A549 (cell line): ENCODE measurements at regions of chr17 and their contacts with region 1.

Region 1: GRCh38 chr17:77054936-77055335 is 85.8 kb upstream of the SEC14L1 start:
- DNase-seq: no peak
- ATAC-seq: peak; percentile 27 to 39; a peak in 5 of 6 replicates
- H3K4me3 ChIP-seq: no peak overlapping the region
- H3K27ac ChIP-seq: peak overlapping the region; percentile 26 to 86; a peak in 5 of 6 replicates
- H3K4me1 ChIP-seq: peaks cover 14% of the 10 kb centered on the region
- CTCF ChIP-seq: no peak
- EP300 ChIP-seq: no peak
- POLR2A ChIP-seq: no peak
- RAD21 ChIP-seq: no peak

Region 2: DNA sequence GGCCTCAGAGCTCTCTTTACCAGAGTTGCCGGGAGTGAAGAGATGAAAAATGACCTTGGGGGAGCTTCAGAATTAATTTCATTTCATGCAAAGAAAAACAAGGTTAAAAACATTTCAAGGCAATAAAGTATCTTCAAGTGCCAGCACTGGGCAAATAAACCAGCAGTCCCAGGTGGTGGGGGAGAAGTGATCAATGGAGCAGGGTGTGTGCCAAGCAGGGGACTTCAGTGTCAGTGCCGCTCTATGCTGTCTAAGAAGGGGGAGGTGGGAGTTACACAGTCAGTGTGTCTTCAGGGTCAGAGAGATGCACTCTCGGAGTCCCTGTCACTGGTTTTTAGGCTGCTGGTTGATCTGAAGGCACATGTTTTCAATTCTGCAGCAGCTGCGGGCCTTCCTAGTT is 244.0 kb before region 1 on chr17:
- CTCF ChIA-PET with region 1: interaction called, 37 read pairs
- POLR2A ChIA-PET with region 1: no interaction called
- DNase-seq: no peak
- ATAC-seq: no peak; a peak in 1 of 6 replicates
- H3K4me3 ChIP-seq: no peak overlapping the region
- H3K27ac ChIP-seq: no peak overlapping the region
- H3K4me1 ChIP-seq: no peaks in the 10 kb centered on the region
- CTCF ChIP-seq: no peak
- EP300 ChIP-seq: no peak
- POLR2A ChIP-seq: no peak
- RAD21 ChIP-seq: no peak

Region 3: GRCh38 chr17:76862494-76862893 is 192.4 kb before region 1 on chr17:
- CTCF ChIA-PET with region 1: interaction called, 776 read pairs
- POLR2A ChIA-PET with region 1: interaction called, 17 read pairs
- DNase-seq: no peak
- ATAC-seq: no peak
- H3K4me3 ChIP-seq: no peak overlapping the region
- H3K27ac ChIP-seq: no peak overlapping the region
- H3K4me1 ChIP-seq: peaks cover 9% of the 10 kb centered on the region
- CTCF ChIP-seq: no peak
- EP300 ChIP-seq: no peak
- POLR2A ChIP-seq: no peak
- RAD21 ChIP-seq: no peak

Region 4: DNA sequence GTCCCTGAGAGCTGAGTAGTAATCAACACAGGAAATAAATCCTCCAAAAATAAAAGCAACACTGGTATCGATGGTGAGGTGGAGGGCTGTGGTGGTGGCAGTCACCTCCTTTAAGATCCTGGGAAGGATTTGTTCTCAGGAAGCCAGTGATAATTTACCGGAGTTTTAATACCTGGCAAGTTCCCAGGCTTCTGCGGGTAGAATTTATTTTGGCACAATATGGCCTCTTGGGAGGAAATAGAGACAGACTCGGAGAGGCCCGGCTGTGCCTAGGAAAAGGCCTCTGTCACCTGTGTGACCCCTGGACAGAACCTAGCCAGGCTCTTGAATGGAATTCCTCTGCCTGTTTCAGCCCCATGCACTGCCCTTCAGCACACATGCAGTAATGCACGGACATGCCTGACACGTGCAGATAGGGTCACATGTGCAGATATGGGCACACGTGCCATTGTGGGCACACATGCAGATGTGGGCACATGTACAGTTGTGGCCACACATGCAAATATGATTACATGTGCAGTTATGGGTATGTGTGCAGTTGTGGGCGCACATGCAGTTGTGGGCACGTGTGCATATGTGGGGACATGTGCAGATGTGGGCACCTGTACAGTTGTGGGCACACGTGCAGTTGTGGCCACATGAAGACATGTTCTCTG is 153.3 kb before region 1 on chr17:
- CTCF ChIA-PET with region 1: interaction called, 14 read pairs
- POLR2A ChIA-PET with region 1: no interaction called
- DNase-seq: no peak
- ATAC-seq: no peak
- H3K4me3 ChIP-seq: no peak overlapping the region
- H3K27ac ChIP-seq: no peak overlapping the region
- H3K4me1 ChIP-seq: no peaks in the 10 kb centered on the region
- CTCF ChIP-seq: no peak
- EP300 ChIP-seq: no peak
- POLR2A ChIP-seq: no peak
- RAD21 ChIP-seq: no peak

Region 5: DNA sequence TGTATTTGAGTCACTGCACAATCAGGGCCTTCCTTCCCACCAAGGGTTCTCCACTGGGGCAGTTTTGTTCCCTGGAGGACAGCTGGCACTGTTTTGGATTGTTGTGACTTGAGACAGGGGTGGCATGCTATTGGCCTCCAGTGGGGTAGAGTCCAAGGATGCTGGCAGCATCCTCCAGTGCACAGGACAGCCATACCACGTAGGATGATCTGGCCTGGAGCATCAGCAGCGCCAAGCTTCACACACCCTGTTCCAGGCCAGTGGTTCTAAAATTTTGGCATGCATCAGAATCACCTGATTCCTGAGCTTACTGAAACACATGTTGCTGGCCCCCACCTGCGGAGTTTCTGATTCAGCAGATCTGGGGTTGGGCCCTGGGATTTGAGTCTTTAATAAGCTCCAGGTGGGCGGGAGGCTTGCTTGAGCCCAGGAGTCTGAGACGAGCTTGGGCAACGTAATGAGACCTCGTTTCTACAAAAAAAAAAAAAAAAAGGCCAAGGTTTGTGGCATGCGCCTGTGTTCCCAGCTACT is 103.5 kb before region 1 on chr17:
- CTCF ChIA-PET with region 1: interaction called, 39 read pairs
- POLR2A ChIA-PET with region 1: no interaction called
- DNase-seq: no peak
- ATAC-seq: no peak
- H3K4me3 ChIP-seq: no peak overlapping the region
- H3K27ac ChIP-seq: no peak overlapping the region
- H3K4me1 ChIP-seq: no peaks in the 10 kb centered on the region
- CTCF ChIP-seq: no peak
- EP300 ChIP-seq: no peak
- POLR2A ChIP-seq: no peak
- RAD21 ChIP-seq: no peak

Region 6: DNA sequence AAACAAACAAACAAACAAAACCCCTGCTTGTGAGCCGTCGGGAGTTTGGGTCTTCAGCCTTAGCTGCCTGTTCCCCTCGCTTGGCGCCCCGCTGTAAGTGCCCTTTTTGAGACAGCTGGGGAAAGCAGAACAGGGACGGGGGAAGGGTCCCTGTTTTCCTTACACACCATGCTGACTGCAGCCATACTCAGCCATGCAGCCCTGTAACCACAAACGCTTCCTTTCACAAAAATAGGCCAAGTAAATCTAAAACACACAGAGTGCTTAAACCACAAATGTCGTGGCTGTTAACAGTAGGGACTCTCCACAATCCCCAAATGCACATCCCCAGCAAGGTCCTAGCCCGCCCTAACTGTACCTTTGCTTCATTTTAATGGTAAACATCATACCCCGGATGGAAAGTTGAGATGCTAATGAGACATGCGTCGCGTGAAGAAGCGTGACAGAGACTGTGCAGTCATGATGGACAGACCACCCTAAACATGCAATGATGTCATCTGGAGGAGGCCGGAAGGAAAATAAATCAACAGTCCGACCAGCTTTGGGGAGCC is 56.9 kb before region 1 on chr17:
- CTCF ChIA-PET with region 1: interaction called, 97 read pairs
- POLR2A ChIA-PET with region 1: interaction called, 3 read pairs
- DNase-seq: no peak
- ATAC-seq: no peak
- H3K4me3 ChIP-seq: no peak overlapping the region
- H3K27ac ChIP-seq: peak overlapping the region; percentile 55 to 93; a peak in 5 of 6 replicates
- H3K4me1 ChIP-seq: peaks cover 36% of the 10 kb centered on the region
- CTCF ChIP-seq: no peak
- EP300 ChIP-seq: no peak
- POLR2A ChIP-seq: no peak
- RAD21 ChIP-seq: no peak

Region 7: GRCh38 chr17:77076124-77076872 is 21.4 kb after region 1 on chr17:
- CTCF ChIA-PET with region 1: interaction called, 47 read pairs
- POLR2A ChIA-PET with region 1: no interaction called
- DNase-seq: no peak
- ATAC-seq: peak in 1 of 2 experiments; percentile 51; a peak in 2 of 6 replicates
- H3K4me3 ChIP-seq: no peak overlapping the region
- H3K27ac ChIP-seq: no peak overlapping the region
- H3K4me1 ChIP-seq: no peaks in the 10 kb centered on the region
- CTCF ChIP-seq: no peak
- EP300 ChIP-seq: no peak
- POLR2A ChIP-seq: no peak
- RAD21 ChIP-seq: no peak

Region 8: GRCh38 chr17:77101521-77102410 is 46.8 kb after region 1 on chr17:
- CTCF ChIA-PET with region 1: no interaction called
- POLR2A ChIA-PET with region 1: no interaction called
- DNase-seq: no peak
- ATAC-seq: no peak; a peak in 2 of 6 replicates
- H3K4me3 ChIP-seq: no peak overlapping the region
- H3K27ac ChIP-seq: no peak overlapping the region
- H3K4me1 ChIP-seq: peaks cover 25% of the 10 kb centered on the region
- CTCF ChIP-seq: no peak
- EP300 ChIP-seq: no peak
- POLR2A ChIP-seq: no peak
- RAD21 ChIP-seq: no peak